CD8-positive, alpha-beta memory T cell (primary cell): ENCODE measurements at regions of chr1 and their contacts with region 1.

Region 1: DNA sequence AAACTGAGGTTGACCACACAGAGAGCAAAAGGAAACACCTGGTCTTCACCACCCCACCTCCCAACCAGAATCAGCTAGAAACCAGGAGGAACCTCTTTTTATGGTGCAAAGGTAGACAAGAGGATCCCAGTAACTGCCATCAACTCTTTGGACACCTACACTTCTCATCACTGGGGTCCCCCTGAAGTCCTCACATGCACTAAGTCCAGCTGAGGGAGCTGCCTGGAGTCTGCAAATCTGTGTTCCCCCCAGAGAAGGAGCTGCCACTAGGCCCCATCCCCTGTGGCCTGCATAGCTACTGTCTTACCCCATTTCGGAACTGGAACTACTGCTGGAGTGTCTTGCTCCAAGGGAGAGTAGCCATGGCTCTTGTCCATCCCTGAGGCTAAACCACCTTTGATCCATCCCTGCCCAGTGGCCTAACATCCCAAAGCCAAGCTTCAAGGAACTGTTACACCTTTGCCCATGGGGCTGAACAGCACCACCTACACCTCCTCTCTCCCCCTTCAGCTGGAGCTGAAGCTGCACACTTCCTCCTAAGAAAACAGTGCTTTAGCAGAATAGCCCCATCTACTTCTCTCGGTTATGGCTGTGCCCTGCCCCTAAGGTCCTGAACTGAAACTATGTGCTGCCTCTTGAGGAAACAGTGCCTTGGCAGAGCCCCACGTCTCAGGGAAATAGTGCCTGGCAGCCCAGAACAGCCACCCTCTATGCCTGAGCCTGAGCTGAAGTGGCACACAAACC is 85.4 kb upstream of the CD53 start:
- DNase-seq: peak in 4 of 5 donors; percentile 28 to 77 (median 70)
- H3K4me3 ChIP-seq: peak overlapping the region; percentile 35
- H3K4me3 Mint-ChIP-seq: peak overlapping the region; percentile 66 to 79 (median 72)
- H3K27ac ChIP-seq: no peak overlapping the region
- H3K27ac Mint-ChIP-seq: peak overlapping the region; percentile 70 to 93 (median 80)
- H3K4me1 ChIP-seq: peaks cover 63% of the 10 kb centered on the region
- H3K4me1 Mint-ChIP-seq: peaks cover 65 to 68% (median 68%) of the 10 kb centered on the region in 3 donors
- H3K27me3 ChIP-seq: no peaks in the 10 kb centered on the region
- H3K27me3 Mint-ChIP-seq: no peaks in the 10 kb centered on the region

Region 2: GRCh38 chr1:110554871-110555801 is 232.4 kb before region 1 on chr1:
- CTCF ChIA-PET with region 1: interaction called, 11 read pairs
- POLR2A ChIA-PET with region 1: no interaction called
- DNase-seq: peak; percentile 23 to 61 (median 41)
- H3K4me3 ChIP-seq: no peak overlapping the region
- H3K4me3 Mint-ChIP-seq: peak overlapping the region in 5 of 7 donors; percentile 15 to 57 (median 44)
- H3K27ac ChIP-seq: no peak overlapping the region
- H3K27ac Mint-ChIP-seq: no peak overlapping the region
- H3K4me1 ChIP-seq: no peaks in the 10 kb centered on the region
- H3K4me1 Mint-ChIP-seq: peaks cover 0 to 4% (median 2%) of the 10 kb centered on the region in 3 donors
- H3K27me3 ChIP-seq: peaks cover 23% of the 10 kb centered on the region
- H3K27me3 Mint-ChIP-seq: peaks cover 28 to 66% of the 10 kb centered on the region in 2 donors

Region 3: GRCh38 chr1:110674337-110675059 is 113.0 kb before region 1 on chr1 and contains the start of gene KCNA3:
- CTCF ChIA-PET with region 1: interaction called, 10 read pairs
- POLR2A ChIA-PET with region 1: interaction called, 3 read pairs
- DNase-seq: peak; percentile 70 to 87 (median 73)
- H3K4me3 ChIP-seq: peak within 1 kb of the TSS; percentile 90
- H3K4me3 Mint-ChIP-seq: peak within 1 kb of the TSS; percentile 96 to 100 (median 100)
- H3K27ac ChIP-seq: peak within 1 kb of the TSS; percentile 98
- H3K27ac Mint-ChIP-seq: peak within 1 kb of the TSS; percentile 93 to 100 (median 100)
- H3K4me1 ChIP-seq: peaks cover 24% of the 10 kb centered on the region
- H3K4me1 Mint-ChIP-seq: peaks cover 33 to 60% (median 43%) of the 10 kb centered on the region in 3 donors
- H3K27me3 ChIP-seq: no peaks in the 10 kb centered on the region
- H3K27me3 Mint-ChIP-seq: peaks cover 0 to 11% of the 10 kb centered on the region in 2 donors
- total RNA-seq, gene KCNA3: 38.4 to 40.5 TPM

Region 4: DNA sequence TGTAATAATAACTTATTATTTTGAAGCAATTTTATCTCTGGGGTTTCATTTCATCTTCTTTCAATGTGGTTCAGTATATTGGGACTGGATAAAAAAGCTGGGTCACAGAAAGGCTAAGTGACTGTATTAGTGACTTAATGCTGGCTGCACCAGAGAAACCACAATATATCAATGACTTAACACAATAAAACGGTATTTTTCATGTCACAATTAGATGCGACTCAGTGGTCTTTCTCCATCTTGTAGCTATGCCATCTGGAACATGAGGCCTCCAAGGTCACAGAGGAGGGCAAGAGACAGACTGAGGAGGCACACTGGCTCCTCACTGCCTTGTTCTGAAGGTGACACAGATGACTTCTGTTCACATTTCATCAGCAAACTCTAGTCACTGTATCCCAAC is 86.7 kb before region 1 on chr1:
- CTCF ChIA-PET with region 1: no interaction called
- POLR2A ChIA-PET with region 1: no interaction called
- DNase-seq: no peak
- H3K4me3 ChIP-seq: no peak overlapping the region
- H3K4me3 Mint-ChIP-seq: no peak overlapping the region
- H3K27ac ChIP-seq: no peak overlapping the region
- H3K27ac Mint-ChIP-seq: no peak overlapping the region
- H3K4me1 ChIP-seq: no peaks in the 10 kb centered on the region
- H3K4me1 Mint-ChIP-seq: no peaks in the 10 kb centered on the region
- H3K27me3 ChIP-seq: no peaks in the 10 kb centered on the region
- H3K27me3 Mint-ChIP-seq: peaks cover 0 to 2% of the 10 kb centered on the region in 2 donors

Region 5: GRCh38 chr1:110829955-110830553 is 42.6 kb after region 1 on chr1:
- CTCF ChIA-PET with region 1: interaction called, 29 read pairs
- POLR2A ChIA-PET with region 1: interaction called, 8 read pairs
- DNase-seq: peak in 3 of 5 donors; percentile 45 to 53 (median 49)
- H3K4me3 ChIP-seq: no peak overlapping the region
- H3K4me3 Mint-ChIP-seq: no peak overlapping the region
- H3K27ac ChIP-seq: no peak overlapping the region
- H3K27ac Mint-ChIP-seq: no peak overlapping the region
- H3K4me1 ChIP-seq: no peaks in the 10 kb centered on the region
- H3K4me1 Mint-ChIP-seq: peaks cover 6 to 9% (median 7%) of the 10 kb centered on the region in 3 donors
- H3K27me3 ChIP-seq: no peaks in the 10 kb centered on the region
- H3K27me3 Mint-ChIP-seq: peaks cover 4 to 11% of the 10 kb centered on the region in 2 donors

Region 6: DNA sequence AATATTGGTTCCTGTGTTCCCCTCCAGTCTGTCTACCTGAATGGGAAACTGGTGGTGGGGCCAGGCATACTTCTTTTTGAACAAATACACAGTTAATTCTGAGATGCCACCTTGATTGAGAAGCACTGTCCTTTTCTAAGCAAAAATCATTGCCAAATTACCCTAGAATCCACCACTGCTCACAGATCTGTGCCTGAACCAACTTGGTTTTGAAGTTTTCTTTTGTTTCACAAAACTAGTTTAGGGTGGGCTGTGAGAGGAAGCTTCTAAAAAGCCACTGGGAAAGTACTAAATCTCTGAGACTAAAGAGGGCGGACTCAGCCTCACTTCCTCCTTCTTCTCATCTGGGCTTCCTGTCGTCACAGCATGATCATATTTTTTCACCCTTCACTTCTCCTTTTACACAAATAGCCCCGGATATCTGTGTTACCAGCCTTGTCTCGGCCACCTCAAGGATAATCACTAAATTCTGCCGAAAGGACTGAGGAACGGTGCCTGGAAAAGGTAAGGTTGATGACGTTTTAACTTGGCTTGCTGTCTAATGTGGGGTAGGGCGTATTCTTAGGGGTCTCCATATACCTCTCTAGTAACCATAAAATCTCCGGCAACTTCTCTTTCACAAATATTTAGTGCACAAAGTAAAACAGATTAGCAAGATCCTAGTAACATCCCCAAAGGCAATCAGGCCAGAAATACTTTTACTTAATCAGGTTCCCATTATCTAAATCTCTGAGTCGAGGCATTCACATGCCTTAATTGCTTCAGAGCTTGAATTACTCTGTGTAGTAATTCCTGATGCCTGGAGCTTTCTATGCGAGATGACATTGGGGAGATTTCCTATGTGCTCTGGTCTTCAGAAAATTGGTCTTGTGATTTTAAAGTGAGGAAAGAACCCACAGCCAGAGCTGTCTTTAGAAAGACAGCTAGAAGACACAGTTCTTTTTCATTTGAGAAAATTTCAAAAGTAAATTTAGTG is 85.5 kb after region 1 on chr1 and contains the start of gene CD53:
- CTCF ChIA-PET with region 1: interaction called, 6 read pairs
- POLR2A ChIA-PET with region 1: interaction called, 12 read pairs
- DNase-seq: peak; percentile 26 to 84 (median 72)
- H3K4me3 ChIP-seq: peak within 1 kb of the TSS; percentile 94
- H3K4me3 Mint-ChIP-seq: peak within 1 kb of the TSS; percentile 97 to 99 (median 99)
- H3K27ac ChIP-seq: peak within 1 kb of the TSS; percentile 95
- H3K27ac Mint-ChIP-seq: peak within 1 kb of the TSS; percentile 94 to 99 (median 98)
- H3K4me1 ChIP-seq: peaks cover 45% of the 10 kb centered on the region
- H3K4me1 Mint-ChIP-seq: peaks cover 59 to 64% (median 60%) of the 10 kb centered on the region in 3 donors
- H3K27me3 ChIP-seq: no peaks in the 10 kb centered on the region
- H3K27me3 Mint-ChIP-seq: no peaks in the 10 kb centered on the region
- total RNA-seq, gene CD53: 190 to 194 TPM

Region 7: GRCh38 chr1:110986407-110986891 is 198.9 kb after region 1 on chr1:
- CTCF ChIA-PET with region 1: interaction called, 26 read pairs
- POLR2A ChIA-PET with region 1: no interaction called
- DNase-seq: no peak
- H3K4me3 ChIP-seq: no peak overlapping the region
- H3K4me3 Mint-ChIP-seq: no peak overlapping the region
- H3K27ac ChIP-seq: no peak overlapping the region
- H3K27ac Mint-ChIP-seq: no peak overlapping the region
- H3K4me1 ChIP-seq: peaks cover 16% of the 10 kb centered on the region
- H3K4me1 Mint-ChIP-seq: peaks cover 21 to 28% (median 25%) of the 10 kb centered on the region in 3 donors
- H3K27me3 ChIP-seq: no peaks in the 10 kb centered on the region
- H3K27me3 Mint-ChIP-seq: peaks cover 3 to 4% of the 10 kb centered on the region in 2 donors